ENCODE measurements at regions of chr11 and their contacts with region 1.

Region 1: DNA sequence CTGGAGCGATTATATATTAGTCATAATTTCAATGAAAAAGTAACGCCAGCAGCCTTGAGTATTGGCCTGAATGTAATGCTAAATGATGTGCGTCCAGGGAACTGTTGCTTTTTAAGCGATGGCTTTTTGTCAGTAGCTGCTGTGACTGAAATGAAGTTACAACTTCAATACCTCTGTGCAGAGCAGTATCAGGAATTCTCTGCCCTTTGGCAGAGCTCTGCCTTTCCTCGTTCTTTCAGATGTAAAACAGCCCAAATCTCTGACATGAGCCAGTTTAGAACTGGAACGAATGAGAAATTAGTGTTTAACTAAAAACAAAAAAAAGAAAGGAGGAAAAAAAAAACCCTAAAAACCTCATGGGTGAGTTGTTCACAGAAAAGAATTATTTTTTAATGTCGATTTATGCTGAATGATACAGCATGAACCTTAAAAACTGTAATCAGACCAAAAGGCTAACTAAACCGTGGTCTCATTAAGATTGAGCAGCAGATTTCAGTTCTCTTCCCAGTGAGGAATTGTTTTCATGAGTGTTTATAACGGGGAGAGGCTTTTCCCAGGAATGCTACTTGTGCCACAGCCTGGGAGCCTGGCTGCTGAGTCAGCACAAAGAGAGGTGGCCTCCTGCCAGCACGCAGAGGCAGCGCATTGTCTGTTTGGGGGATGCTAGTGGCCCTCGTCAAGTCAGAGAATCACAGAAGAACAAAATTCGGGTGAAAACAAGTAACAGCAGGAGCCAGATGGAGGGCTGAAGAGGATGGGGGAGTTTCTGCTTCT is 146.2 kb upstream of the RASSF10 start:
- DNase-seq: peak; percentile 31 to 41 (median 36)
- ATAC-seq: no peak
- H3K4me3 ChIP-seq: no peak overlapping the region
- H3K27ac ChIP-seq: no peak overlapping the region
- H3K4me1 ChIP-seq: peaks cover 26 to 46% of the 10 kb centered on the region in 2 experiments
- H3K27me3 ChIP-seq: no peaks in the 10 kb centered on the region
- CTCF ChIP-seq: no peak
- EP300 ChIP-seq: no peak
- POLR2A ChIP-seq: no peak
- RAD21 ChIP-seq: no peak

Region 2: GRCh38 chr11:12673924-12674570 is 188.8 kb before region 1 on chr11 and contains the start of gene TEAD1:
- CTCF ChIA-PET with region 1: no interaction called
- POLR2A ChIA-PET with region 1: no interaction called
- in situ Hi-C with region 1: no loop called
- intact Hi-C with region 1: no loop called
- DNase-seq: peak; percentile 94 to 99 (median 98)
- ATAC-seq: peak; percentile 95
- H3K4me3 ChIP-seq: peak within 1 kb of the TSS; percentile 74
- H3K27ac ChIP-seq: peak within 1 kb of the TSS; percentile 86
- H3K4me1 ChIP-seq: peaks cover 5 to 12% of the 10 kb centered on the region in 2 experiments; a peak in 3 of 5 replicates
- H3K27me3 ChIP-seq: no peaks in the 10 kb centered on the region
- CTCF ChIP-seq: no peak; a peak in 1 of 6 replicates
- EP300 ChIP-seq: no peak; the same call in 1 of the 2 replicates
- POLR2A ChIP-seq: peak; percentile 79
- RAD21 ChIP-seq: no peak; a peak in 1 of 4 replicates
- polyA plus RNA-seq, gene TEAD1: 1.7 to 2.1 TPM

Region 3: DNA sequence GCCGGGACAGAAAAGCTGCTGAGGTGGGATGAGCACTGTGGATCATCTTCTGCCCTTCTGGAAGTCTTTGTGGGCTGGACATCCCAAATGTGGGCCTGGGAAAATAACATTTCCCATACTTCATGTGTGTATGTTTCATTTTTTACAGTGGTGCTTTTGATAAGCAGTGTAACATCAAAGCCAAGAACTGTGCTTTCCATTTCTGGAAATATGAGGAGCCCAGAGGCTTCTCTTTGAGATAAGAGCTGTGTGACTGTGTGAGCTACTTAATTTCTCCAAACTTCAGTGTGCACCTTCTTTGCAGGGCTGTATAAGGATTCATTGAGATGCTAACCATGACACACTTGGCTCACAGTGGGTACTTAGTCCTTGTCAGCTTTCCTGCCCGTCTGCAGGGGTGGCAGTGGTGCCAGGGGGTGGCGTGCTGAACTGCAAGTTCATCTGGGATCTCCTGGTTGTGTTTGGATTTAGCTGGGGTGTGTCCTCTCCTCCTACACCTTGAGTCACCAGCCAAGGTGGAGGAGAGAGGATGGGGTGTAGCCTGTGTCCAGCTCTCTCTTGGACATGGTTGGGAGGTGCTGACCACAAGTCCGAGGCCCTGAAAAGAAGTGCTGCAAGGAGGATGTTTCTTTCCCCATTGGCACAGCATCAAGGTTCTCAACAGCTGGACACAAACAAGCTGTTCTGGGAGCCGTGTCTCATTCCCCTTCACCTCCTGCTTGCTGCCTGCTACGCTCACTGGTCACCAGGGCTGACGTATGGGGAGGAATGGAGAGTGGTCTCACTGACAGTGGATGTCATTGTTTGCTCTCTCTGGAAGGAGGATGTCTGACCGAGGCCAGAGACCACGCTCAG is 49.3 kb before region 1 on chr11:
- CTCF ChIA-PET with region 1: no interaction called
- POLR2A ChIA-PET with region 1: interaction called, 6 read pairs
- in situ Hi-C with region 1: no loop called
- intact Hi-C with region 1: loop called (anchors 5 kb)
- DNase-seq: peak; percentile 16 to 54 (median 34)
- ATAC-seq: peak; percentile 15
- H3K4me3 ChIP-seq: no peak overlapping the region
- H3K27ac ChIP-seq: 0 out of 3 replicates have a peak overlapping the region, but pooled peaks have one; percentile 0
- H3K4me1 ChIP-seq: peaks cover 31 to 58% of the 10 kb centered on the region in 2 experiments
- H3K27me3 ChIP-seq: no peaks in the 10 kb centered on the region
- CTCF ChIP-seq: no peak
- EP300 ChIP-seq: no peak
- POLR2A ChIP-seq: no peak
- RAD21 ChIP-seq: 0 out of 4 replicates have a peak, but pooled peaks of 1 of the 2 experiments have one; percentile 1

Region 4: DNA sequence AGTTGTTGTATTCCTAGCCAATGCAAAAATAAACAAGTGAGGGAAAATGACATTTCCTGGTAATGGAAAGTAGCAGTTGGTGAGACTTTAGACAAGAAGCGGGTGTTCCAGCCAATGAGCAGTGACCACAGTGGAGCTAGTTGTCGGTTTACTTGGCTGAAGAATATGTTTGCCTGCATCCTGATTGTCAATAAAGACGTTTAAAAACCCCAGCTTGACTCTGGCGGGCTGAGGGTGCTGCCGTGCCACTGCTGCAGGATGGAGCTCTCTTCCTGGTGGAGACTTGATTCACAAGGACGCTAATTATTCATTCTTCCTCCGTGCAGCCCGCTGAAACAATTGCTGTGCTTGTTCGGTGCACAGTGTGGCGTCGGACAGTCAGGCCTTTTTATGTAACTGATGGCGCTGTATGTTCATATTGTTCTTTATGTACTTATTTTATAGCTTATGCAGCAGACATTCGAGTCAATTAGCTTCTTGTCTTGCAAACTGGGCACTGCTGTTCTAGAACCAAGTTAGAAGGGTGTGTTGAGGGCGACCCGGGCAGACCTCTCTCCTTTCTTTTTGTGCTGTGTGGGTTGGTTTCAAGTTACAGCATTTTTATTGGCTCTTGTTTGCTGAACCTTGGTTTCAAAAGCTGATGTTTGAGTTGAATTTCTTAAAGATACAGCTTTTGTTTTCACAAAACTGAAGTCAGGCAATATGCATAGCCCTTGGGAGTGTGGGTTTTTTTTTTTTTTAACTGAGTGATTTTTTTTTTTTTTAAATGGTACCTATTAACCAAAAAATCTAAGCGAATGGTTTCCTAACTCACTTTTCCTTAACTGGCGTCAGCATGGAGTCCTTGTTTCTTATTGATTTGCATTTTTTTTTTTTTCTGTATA is 34.7 kb before region 1 on chr11:
- CTCF ChIA-PET with region 1: no interaction called
- POLR2A ChIA-PET with region 1: no interaction called
- in situ Hi-C with region 1: no loop called
- intact Hi-C with region 1: loop called (anchors 5 kb)
- DNase-seq: peak in 2 of 4 experiments; percentile 67 to 68
- ATAC-seq: peak; percentile 87
- H3K4me3 ChIP-seq: peak overlapping the region; percentile 18
- H3K27ac ChIP-seq: peak overlapping the region; percentile 57
- H3K4me1 ChIP-seq: peaks cover 9 to 35% of the 10 kb centered on the region in 2 experiments; a peak in 4 of 5 replicates
- H3K27me3 ChIP-seq: no peaks in the 10 kb centered on the region
- CTCF ChIP-seq: peak in 2 of 3 experiments; percentile 15 to 18; a peak in 3 of 6 replicates
- EP300 ChIP-seq: no peak
- POLR2A ChIP-seq: 0 out of 2 replicates have a peak, but pooled peaks have one; percentile 34
- RAD21 ChIP-seq: peak; percentile 23 to 26; a peak in 3 of 4 replicates